CD4-positive, alpha-beta T cell (primary cell): ENCODE measurements at regions of chr6 and their contacts with region 1.

Region 1: DNA sequence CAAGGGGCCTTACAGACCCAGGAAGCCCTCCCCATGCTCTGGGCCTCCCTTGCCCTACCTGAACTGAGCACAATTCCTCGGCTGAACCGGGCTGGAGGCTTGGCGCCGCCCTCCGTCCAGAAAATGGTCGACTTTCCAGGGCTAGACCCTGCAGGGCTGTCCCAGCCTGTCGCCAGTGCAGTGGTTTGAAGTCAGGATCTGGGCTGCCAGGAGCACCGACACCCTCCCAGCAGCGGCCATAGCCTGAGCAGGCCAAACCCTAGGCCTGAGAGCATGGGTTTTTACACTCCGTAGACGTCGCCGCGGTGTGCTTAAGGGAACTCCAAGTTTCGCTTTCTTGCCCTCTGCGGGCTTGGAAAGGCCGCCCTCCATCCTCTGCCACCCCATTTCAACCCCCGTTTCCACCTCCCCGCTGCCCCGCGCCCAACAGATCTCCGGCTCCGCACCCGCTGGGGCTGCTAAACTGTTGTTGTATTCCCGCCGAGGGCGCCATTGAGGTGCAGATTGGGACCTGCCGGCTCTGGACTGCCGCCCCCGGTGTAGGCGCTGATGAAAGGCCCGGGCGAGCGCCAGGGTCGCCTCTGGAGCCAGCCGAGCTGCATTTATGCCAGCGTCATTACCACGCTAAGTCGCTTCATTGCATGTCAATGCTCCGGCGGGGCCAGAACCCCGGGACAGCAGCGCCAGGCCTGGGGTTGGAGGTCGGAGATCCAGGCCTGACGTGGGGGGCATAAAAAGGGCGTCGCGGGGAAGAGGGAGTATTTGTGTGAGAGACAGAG is 2.2 kb upstream of the TFAP2A start:
- DNase-seq: no peak
- ATAC-seq: no peak
- H3K4me3 ChIP-seq: peak overlapping the region; percentile 12
- H3K4me3 Mint-ChIP-seq: peak overlapping the region; percentile 56
- H3K27ac ChIP-seq: no peak overlapping the region
- H3K27ac Mint-ChIP-seq: no peak overlapping the region
- H3K4me1 ChIP-seq: peaks cover 38% of the 10 kb centered on the region
- H3K4me1 Mint-ChIP-seq: peaks cover 36% of the 10 kb centered on the region
- H3K27me3 ChIP-seq: peaks cover 90 to 93% of the 10 kb centered on the region in 2 experiments
- H3K27me3 Mint-ChIP-seq: peaks cover 95% of the 10 kb centered on the region
- CTCF ChIP-seq: no peak

Region 2: GRCh38 chr6:9292975-9293374 is 1124.1 kb before region 1 on chr6:
- CTCF ChIA-PET with region 1: no interaction called
- POLR2A ChIA-PET with region 1: no interaction called
- intact Hi-C with region 1: no loop called
- DNase-seq: no peak
- ATAC-seq: no peak
- H3K4me3 ChIP-seq: no peak overlapping the region
- H3K4me3 Mint-ChIP-seq: no peak overlapping the region
- H3K27ac ChIP-seq: no peak overlapping the region
- H3K27ac Mint-ChIP-seq: no peak overlapping the region
- H3K4me1 ChIP-seq: no peaks in the 10 kb centered on the region
- H3K4me1 Mint-ChIP-seq: no peaks in the 10 kb centered on the region
- H3K27me3 ChIP-seq: no peaks in the 10 kb centered on the region
- H3K27me3 Mint-ChIP-seq: no peaks in the 10 kb centered on the region
- CTCF ChIP-seq: no peak

Region 3: DNA sequence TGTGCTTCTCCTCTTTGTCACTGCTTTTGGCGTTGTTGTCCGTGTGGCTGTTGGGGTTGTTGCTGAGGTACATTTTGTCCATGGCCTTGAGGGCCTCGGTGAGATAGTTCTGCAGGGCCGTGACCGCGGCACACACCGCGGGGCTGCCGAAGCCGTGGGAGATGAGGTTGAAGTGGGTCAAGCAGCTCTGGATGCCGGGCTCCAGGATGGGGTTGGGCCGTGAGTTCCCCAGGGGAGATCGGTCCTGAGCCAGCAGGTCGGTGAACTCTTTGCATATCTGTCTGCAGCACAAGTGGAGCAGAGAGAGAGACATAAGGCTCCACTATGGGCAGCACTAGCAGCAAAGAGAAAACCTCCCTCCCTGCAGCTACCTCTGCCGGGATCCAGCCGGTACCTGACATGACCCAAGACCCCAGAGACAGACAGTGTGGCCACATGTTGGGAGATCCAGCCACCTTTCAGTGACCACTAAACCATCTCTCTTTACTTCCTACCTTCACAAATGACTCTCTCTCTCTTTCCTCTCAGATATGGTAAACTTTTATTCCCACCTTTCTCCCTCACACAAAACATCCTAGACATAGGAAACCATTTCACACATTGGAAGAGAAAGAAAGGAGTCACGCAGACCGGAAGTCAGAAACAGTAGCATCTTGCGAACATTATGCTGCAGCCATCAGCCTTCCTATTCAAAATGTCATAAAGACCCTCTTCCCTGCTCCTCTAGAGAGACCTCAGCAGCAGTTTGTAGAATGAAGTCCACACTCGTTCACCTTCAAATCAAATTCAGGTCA is 18.4 kb before region 1 on chr6:
- CTCF ChIA-PET with region 1: no interaction called
- POLR2A ChIA-PET with region 1: no interaction called
- intact Hi-C with region 1: loop called in 1 of 2 experiments (anchors 1 kb)
- DNase-seq: no peak
- ATAC-seq: no peak
- H3K4me3 ChIP-seq: no peak overlapping the region
- H3K4me3 Mint-ChIP-seq: no peak overlapping the region
- H3K27ac ChIP-seq: no peak overlapping the region
- H3K27ac Mint-ChIP-seq: no peak overlapping the region
- H3K4me1 ChIP-seq: peaks cover 3% of the 10 kb centered on the region
- H3K4me1 Mint-ChIP-seq: peaks cover 7% of the 10 kb centered on the region
- H3K27me3 ChIP-seq: peaks cover 60 to 69% of the 10 kb centered on the region in 2 experiments
- H3K27me3 Mint-ChIP-seq: peaks cover 89% of the 10 kb centered on the region
- CTCF ChIP-seq: no peak